ENCODE measurements at regions of chr19 and their contacts with region 1.

Region 1: DNA sequence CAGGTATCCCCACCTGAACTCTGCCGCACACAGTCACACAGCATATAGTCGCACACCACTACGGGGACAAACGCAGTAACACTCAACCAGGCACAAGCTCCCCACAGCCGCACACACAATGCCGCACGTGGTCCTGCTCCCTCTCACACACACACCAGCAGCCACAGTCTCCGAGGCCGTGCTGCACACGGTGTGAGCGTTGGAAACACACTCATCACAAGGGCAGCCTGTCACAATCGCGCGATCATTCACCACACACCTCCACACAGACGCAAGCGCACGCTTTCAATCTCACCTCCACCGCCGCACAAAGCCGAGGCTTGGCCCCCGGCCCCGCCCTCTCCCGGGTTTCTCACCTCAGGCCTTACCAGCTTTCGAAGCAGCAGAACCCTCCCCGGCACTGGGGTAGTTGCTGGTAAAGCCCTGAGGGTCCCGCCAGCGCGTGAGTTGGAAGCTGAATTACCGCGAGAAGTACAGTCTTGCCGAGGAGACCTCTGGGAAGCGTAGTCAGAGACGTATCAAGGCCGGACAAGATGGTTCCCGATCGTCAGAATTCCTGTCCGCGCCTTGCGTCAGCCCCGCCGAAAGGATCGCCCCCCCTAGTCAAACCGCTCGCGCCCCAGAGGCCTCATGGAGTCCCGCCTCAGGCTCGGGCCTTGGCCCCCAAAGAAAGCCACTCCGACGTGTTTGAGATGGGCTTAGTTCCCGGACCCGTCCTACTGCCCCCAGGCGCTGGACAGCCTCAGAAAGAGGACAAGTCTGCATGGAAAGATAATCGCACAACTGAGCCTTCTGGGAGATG is at the start of gene ZNF566:
- DNase-seq: peak; percentile 97 to 99
- H3K4me3 ChIP-seq: peak within 1 kb of the TSS; percentile 93
- H3K4me3 Mint-ChIP-seq: peak within 1 kb of the TSS; percentile 91
- H3K27ac Mint-ChIP-seq: peak within 1 kb of the TSS; percentile 99
- H3K4me1 ChIP-seq: no peaks in the 10 kb centered on the region
- H3K4me1 Mint-ChIP-seq: peaks cover 14% of the 10 kb centered on the region
- H3K27me3 ChIP-seq: no peaks in the 10 kb centered on the region
- H3K27me3 Mint-ChIP-seq: no peaks in the 10 kb centered on the region
- CTCF ChIP-seq: no peak
- total RNA-seq, gene ZNF566: 10.0 and 11.6 TPM in 2 replicates

Region 2: DNA sequence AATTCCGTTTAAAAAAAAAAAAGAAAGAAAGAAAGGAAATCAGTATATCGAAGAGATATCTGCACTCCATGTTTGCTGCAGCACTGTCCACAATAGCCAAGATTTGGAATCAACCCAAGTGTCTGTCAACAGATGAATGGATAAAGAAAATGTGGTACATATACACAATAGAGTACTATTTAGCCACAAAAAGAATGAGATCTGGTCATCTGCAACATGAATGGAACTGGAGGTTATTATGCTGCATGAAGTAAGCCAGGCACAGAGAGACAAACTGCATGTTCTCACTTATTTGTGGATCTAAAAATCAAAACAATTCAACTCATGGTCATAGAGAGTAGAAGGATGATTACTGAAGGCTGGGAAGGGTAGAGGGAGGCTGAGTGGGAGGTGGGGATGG is 291.2 kb before region 1 on chr19:
- CTCF ChIA-PET with region 1: no interaction called
- POLR2A ChIA-PET with region 1: no interaction called
- intact Hi-C with region 1: loop called (anchors 5 kb)
- DNase-seq: no peak
- H3K4me3 ChIP-seq: no peak overlapping the region
- H3K4me3 Mint-ChIP-seq: no peak overlapping the region
- H3K27ac Mint-ChIP-seq: no peak overlapping the region
- H3K4me1 ChIP-seq: no peaks in the 10 kb centered on the region
- H3K4me1 Mint-ChIP-seq: no peaks in the 10 kb centered on the region
- H3K27me3 ChIP-seq: no peaks in the 10 kb centered on the region
- H3K27me3 Mint-ChIP-seq: no peaks in the 10 kb centered on the region
- CTCF ChIP-seq: no peak

Region 3: GRCh38 chr19:36456831-36457230 is 32.5 kb before region 1 on chr19:
- CTCF ChIA-PET with region 1: no interaction called
- POLR2A ChIA-PET with region 1: no interaction called
- intact Hi-C with region 1: loop called (anchors 1 kb)
- DNase-seq: no peak
- H3K4me3 ChIP-seq: no peak overlapping the region
- H3K4me3 Mint-ChIP-seq: no peak overlapping the region
- H3K27ac Mint-ChIP-seq: no peak overlapping the region
- H3K4me1 ChIP-seq: no peaks in the 10 kb centered on the region
- H3K4me1 Mint-ChIP-seq: no peaks in the 10 kb centered on the region
- H3K27me3 ChIP-seq: no peaks in the 10 kb centered on the region
- H3K27me3 Mint-ChIP-seq: no peaks in the 10 kb centered on the region
- CTCF ChIP-seq: no peak

Region 4: DNA sequence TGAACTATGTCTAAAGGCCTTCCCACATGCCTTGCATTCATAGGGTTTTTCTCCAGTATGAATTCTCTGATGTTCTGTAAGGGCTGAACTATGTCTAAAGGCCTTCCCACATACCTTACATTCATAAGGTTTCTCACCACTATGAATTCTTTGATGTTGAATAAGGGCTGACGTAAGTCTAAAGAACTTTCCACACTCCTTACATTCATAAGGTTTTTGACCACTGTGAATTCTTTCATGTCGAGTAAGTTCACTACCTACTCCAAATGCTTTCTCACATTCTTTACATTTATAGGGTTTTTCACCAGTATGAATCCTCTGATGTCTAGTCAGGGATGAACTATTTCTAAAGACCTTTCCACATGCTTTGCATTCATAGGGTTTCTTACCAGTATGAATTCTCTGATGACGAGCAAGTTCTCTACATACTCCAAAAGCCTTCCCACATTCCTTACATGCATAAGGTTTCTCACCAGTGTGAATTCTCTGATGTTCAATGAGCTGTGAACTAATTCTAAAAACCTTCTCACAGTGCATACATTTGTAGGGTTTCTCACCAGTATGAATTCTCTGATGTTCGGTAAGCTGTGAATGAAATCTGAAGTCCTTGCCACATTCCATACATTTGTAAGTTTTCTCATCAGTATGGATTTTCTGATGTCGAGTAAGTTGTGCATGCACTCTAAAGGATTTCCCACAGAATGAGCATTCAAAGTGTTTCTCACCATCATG is 57.8 kb after region 1 on chr19:
- CTCF ChIA-PET with region 1: no interaction called
- POLR2A ChIA-PET with region 1: no interaction called
- intact Hi-C with region 1: no loop called
- DNase-seq: no peak
- H3K4me3 ChIP-seq: no peak overlapping the region
- H3K4me3 Mint-ChIP-seq: no peak overlapping the region
- H3K27ac Mint-ChIP-seq: no peak overlapping the region
- H3K4me1 ChIP-seq: no peaks in the 10 kb centered on the region
- H3K4me1 Mint-ChIP-seq: no peaks in the 10 kb centered on the region
- H3K27me3 ChIP-seq: no peaks in the 10 kb centered on the region
- H3K27me3 Mint-ChIP-seq: no peaks in the 10 kb centered on the region
- CTCF ChIP-seq: no peak

Region 5: DNA sequence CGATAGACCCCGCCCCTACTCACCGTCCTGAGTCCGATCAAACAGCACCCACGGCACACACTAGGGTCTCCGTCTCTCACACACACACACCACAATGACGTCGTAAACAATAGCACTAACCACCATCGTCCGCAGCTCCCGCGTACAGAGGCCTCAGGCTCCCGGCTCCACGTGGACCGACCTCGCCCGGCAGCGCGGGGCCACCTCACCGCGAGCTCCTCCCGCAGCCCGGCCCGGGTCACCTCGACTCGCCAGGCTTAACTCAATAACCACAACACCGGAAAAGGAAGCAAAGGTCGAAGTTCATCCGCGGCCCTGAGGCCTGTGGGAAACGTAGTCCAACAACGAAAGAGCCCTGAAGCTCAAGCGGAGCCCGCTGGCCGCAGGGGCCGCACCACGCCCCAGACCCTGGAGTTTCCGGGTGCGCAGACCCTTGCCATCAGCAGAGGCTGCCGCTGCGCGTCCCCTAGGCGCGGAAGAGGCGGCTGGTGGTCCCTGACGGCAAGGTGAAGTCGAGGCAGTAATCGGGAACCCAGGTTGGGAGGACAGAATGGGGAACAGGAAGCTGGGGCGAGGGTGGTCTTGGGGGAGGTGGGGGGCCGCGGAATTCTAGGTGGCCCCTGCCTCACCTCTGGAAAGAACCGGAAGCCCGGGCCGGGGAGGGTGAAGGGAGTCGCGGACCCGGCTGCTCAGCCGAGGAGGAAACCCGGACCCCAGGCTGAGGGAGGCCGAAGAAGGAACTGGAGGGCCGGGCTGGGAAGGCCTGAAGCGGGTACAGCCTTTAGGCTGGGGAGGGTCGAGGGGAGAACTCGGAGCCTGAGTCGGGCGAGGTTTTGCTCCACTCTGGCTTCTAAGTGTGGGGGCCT is 83.9 kb after region 1 on chr19 and contains the start of gene ZNF529:
- CTCF ChIA-PET with region 1: no interaction called
- POLR2A ChIA-PET with region 1: interaction called, 14 read pairs
- intact Hi-C with region 1: loop called (anchors 1 kb)
- DNase-seq: peak; percentile 95
- H3K4me3 ChIP-seq: peak within 1 kb of the TSS; percentile 74
- H3K4me3 Mint-ChIP-seq: peak within 1 kb of the TSS; percentile 87
- H3K27ac Mint-ChIP-seq: peak within 1 kb of the TSS; percentile 93
- H3K4me1 ChIP-seq: 0 out of 2 replicates have a peak, but pooled peaks cover 6% of the 10 kb centered on the region
- H3K4me1 Mint-ChIP-seq: peaks cover 25% of the 10 kb centered on the region
- H3K27me3 ChIP-seq: no peaks in the 10 kb centered on the region
- H3K27me3 Mint-ChIP-seq: no peaks in the 10 kb centered on the region
- CTCF ChIP-seq: peak in 1 of 2 experiments; percentile 7
- total RNA-seq, gene ZNF529: 5.6 and 10.5 TPM in 2 replicates

Region 6: GRCh38 chr19:36772311-36773222 is 283.2 kb after region 1 on chr19 and contains the start of gene ZNF850:
- CTCF ChIA-PET with region 1: no interaction called
- POLR2A ChIA-PET with region 1: interaction called, 3 read pairs
- intact Hi-C with region 1: loop called (anchors 5 kb)
- DNase-seq: peak; percentile 93 to 96
- H3K4me3 ChIP-seq: peak within 1 kb of the TSS; percentile 66
- H3K4me3 Mint-ChIP-seq: peak within 1 kb of the TSS; percentile 96
- H3K27ac Mint-ChIP-seq: peak within 1 kb of the TSS; percentile 88
- H3K4me1 ChIP-seq: no peaks in the 10 kb centered on the region
- H3K4me1 Mint-ChIP-seq: peaks cover 17% of the 10 kb centered on the region
- H3K27me3 ChIP-seq: no peaks in the 10 kb centered on the region
- H3K27me3 Mint-ChIP-seq: no peaks in the 10 kb centered on the region
- CTCF ChIP-seq: no peak
- total RNA-seq, gene ZNF850: 7.2 and 7.8 TPM in 2 replicates

Measured in Caco-2 (cell line).